GM13977 (cell line): ENCODE measurements at regions of chr7 and their contacts with region 1.

Region 1: DNA sequence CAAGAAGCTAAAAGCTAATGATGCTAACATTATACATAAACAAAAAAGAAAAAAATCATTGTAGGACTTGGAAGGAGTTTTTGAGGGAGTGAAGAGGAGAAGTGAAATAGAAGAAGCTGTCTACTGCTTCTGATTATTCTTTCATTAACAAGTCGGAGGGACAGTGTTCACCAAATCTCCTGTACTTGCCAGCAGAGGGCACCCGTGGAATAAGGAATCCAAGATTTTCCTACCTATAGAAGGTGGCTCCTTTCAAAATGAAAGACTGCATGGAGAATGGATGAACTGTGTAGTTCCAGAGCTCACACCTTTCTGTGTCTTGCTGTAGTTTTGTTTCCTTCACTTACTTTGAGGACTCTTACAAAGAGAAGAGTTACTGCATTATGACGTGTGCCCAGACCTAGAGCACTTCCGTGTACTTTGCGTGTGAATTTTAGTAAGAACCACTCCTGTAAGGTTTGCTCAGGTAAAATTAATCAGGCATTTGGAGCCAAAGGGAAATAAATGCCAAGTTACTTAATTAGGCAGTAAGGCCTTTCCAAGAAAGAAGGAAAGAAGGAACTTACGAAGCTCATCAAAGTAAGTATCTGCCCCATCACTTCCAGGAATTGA is 145.1 kb downstream of the SEMA3D start:
- DNase-seq: peak; percentile 4
- CTCF ChIP-seq: peak; percentile 69

Region 2: GRCh38 chr7:84331616-84332015 is 710.1 kb before region 1 on chr7:
- in situ Hi-C with region 1: no loop called
- DNase-seq: no peak
- CTCF ChIP-seq: no peak

Region 3: DNA sequence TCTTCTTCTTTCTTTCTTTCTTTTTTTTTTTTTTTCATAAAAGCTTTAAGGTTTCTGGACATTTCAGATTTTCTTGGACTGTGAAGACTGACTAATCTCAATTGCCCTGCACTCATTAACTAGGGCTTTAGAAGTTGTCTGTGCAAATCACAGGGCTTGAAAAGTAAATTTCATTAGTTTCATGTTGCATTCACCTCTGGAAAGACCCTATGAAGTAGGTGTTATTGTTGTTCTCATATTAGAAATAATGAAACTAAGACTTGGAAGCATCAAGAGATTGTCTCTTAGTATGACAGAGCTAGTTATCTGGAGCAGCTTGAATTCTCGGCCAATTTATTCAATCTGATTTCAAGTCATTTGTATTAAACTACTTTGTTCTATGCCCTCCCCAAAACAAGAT is 173.4 kb after region 1 on chr7:
- in situ Hi-C with region 1: no loop called
- DNase-seq: no peak
- CTCF ChIP-seq: no peak

Region 4: DNA sequence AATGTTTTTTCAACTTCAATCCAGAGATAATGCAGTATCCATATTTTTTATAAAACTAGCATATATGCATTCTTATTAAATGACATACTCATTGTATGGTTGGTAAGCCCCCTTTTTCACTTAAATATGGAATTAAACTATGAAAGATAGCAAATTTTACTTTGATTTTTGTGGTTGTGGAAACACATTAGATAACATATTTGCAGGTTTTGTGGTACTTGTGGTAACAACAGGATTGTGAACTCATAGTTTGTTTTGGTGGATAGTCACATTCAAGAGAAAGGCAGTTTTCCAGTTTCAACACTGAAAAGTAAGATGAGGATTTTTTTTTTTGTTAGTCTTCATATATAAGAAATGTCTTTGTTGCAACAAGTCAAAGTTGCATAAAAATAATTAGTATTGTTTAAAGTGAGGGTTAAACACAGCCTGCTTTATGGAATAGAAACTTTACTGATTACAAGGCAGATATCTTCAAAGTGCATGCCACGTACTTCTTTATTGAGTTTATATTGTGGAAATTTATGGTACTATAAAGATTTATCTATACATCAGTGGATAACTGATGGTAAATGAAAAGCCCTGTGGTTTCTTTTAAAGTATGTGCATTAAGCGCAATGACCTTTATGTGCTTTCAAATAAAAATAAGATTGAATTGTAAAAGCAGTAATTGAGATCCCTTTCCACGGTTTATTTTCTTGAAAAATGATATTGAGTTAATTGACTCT is 184.8 kb after region 1 on chr7:
- in situ Hi-C with region 1: no loop called
- DNase-seq: no peak
- CTCF ChIP-seq: no peak

Region 5: DNA sequence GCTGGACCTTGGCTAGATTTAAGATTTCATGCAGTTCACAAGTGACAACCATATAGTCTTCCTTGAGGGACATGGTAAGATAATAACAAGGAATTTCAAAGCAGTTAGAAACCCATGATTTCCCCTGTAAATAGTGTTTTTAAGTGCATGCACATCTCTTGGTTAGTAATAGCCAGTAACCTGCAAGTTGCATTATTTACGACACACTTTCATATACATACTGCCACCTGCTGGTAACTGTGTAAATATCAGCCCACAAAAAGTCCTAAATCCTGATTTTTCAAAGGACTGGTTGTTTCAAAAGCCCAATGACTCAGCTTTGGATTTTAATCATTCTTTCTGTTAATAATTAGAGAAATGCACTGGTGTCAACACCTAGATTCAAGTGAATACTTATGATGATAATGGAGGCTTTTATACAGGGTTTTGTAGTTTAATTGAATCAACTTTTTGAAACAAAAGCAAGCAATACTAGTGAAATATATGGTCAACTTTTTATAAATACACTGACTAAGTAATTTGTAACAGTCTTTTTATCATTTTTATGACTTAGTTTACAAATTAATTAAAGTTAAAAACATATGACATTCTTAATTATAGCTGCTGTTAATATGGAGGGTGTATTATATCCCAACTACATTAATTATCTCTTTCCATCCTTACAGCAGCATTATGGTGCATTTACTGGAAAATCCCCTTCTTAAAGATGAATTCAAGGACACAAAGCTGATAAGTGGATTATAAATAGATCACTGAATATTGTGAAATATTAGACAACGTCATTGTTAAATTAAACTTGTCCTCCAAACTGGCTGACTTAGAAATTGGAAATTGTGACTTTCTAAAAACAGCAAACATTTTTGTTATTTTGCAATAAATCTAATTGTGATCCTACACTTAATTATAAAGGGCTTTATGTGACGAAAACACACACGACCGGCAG is 512.8 kb after region 1 on chr7:
- in situ Hi-C with region 1: loop called (anchors 25 kb)
- DNase-seq: peak; percentile 6
- CTCF ChIP-seq: peak; percentile 65

Region 6: DNA sequence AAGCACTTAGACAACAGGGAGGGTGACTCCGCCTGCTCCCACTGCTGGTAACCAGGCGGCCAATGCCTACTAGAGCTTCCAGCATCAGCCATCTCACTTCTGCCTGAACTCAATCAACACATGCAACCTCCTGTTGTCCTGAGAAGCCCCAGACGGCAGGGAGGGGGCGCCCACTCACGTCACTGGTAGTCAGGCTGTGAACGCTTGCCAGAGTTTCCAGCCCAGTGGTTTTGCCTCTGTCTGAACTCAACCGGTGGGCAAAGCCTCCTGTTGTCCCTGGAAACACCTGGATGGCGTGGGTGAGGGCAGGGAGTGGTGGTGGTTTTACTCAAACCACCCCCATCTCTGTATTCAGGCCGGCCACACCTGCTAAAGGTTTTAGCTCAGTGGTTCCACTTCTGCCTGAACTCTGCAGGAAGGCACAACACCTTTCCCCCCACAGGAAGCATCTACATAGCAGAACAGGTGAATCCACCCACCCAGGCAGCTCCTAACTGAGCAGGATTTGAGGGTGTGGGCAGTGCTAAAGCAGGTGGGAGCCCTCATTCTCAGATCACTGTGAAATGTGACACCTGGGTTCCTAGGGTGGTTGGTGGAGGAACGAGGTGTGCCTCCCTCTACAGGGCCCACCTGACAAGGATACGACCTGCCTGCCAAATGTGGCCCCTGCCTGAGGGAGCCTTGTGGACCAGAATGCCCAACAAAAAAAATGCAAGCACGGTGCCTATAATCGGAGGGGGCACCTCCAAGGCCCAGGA is 708.2 kb after region 1 on chr7:
- in situ Hi-C with region 1: loop called (anchors 25 kb)
- DNase-seq: no peak
- CTCF ChIP-seq: no peak